Natural killer cell (primary cell): ENCODE measurements at regions of chr1 and their contacts with region 1.

Region 1: GRCh38 chr1:51044834-51045233 is 57.2 kb upstream of the C1orf185 start:
- DNase-seq: peak in 1 of 2 donors; percentile 25
- ATAC-seq: no peak
- H3K4me3 ChIP-seq: no peak overlapping the region
- H3K4me3 Mint-ChIP-seq: no peak overlapping the region
- H3K27ac ChIP-seq: no peak overlapping the region
- H3K27ac Mint-ChIP-seq: no peak overlapping the region
- H3K4me1 ChIP-seq: no peaks in the 10 kb centered on the region
- H3K4me1 Mint-ChIP-seq: no peaks in the 10 kb centered on the region
- H3K27me3 ChIP-seq: no peaks in the 10 kb centered on the region
- H3K27me3 Mint-ChIP-seq: peaks cover 17 to 43% of the 10 kb centered on the region in 2 donors
- CTCF ChIP-seq: peak; percentile 33

Region 2: DNA sequence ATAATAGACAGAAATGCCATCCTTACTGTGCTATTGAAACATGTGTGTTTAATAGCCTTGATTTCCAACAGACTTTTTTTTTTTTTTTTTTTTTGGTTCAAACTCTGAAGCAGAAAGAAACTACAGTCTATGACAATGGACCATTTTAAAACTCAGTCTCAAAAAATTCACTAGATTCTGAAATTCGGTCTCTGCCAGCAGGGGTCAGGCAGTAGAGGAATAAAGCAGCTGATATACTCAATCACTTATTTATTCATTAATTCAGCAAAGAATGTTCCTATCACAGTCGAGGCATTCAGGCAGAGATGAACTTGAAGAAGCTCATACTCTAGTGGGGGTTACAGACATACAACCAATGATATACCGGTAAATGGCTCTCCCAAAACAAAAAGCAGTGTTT is 360.6 kb before region 1 on chr1:
- intact Hi-C with region 1: no loop called
- DNase-seq: no peak
- ATAC-seq: no peak
- H3K4me3 ChIP-seq: no peak overlapping the region
- H3K4me3 Mint-ChIP-seq: no peak overlapping the region
- H3K27ac ChIP-seq: no peak overlapping the region
- H3K27ac Mint-ChIP-seq: no peak overlapping the region
- H3K4me1 ChIP-seq: no peaks in the 10 kb centered on the region
- H3K4me1 Mint-ChIP-seq: no peaks in the 10 kb centered on the region
- H3K27me3 ChIP-seq: no peaks in the 10 kb centered on the region
- H3K27me3 Mint-ChIP-seq: no peaks in the 10 kb centered on the region
- CTCF ChIP-seq: no peak

Region 3: DNA sequence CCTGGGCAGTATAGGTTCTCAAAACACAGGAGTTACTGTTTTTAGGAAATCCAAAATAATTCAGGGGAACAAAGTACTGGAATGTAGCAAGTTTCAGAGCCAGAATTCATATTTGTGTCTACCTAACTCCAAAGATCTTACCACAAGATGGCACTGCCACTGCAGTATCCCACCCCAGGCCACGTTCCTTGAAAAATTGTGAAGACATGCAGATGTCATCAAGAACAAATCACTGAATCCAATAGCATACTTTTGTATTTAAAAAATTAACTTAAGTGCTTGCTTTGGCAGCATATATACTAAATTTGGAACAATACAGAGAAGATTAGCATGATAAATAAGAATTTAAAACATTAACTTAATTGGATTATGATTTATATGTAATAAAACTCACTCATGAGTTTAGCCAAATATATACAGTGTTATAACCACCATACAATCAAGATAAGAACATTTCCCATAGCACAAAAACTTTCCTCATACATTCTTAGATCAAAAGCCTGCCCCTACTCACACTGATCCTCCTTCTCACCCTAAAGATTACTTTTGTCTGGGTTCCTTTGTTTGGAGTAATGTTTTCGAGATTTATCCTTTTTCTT is 294.7 kb before region 1 on chr1:
- intact Hi-C with region 1: no loop called
- DNase-seq: peak in 1 of 2 donors; percentile 13
- ATAC-seq: no peak
- H3K4me3 ChIP-seq: no peak overlapping the region
- H3K4me3 Mint-ChIP-seq: no peak overlapping the region
- H3K27ac ChIP-seq: no peak overlapping the region
- H3K27ac Mint-ChIP-seq: no peak overlapping the region
- H3K4me1 ChIP-seq: no peaks in the 10 kb centered on the region
- H3K4me1 Mint-ChIP-seq: peaks cover 0 to 4% of the 10 kb centered on the region in 2 donors
- H3K27me3 ChIP-seq: no peaks in the 10 kb centered on the region
- H3K27me3 Mint-ChIP-seq: no peaks in the 10 kb centered on the region
- CTCF ChIP-seq: peak; percentile 12

Region 4: GRCh38 chr1:50873458-50874187 is 171.2 kb before region 1 on chr1:
- intact Hi-C with region 1: loop called (anchors 10 kb)
- DNase-seq: peak; percentile 37 to 76
- ATAC-seq: peak; percentile 58 to 77 (median 76)
- H3K4me3 ChIP-seq: no peak overlapping the region
- H3K4me3 Mint-ChIP-seq: no peak overlapping the region
- H3K27ac ChIP-seq: no peak overlapping the region
- H3K27ac Mint-ChIP-seq: no peak overlapping the region
- H3K4me1 ChIP-seq: no peaks in the 10 kb centered on the region
- H3K4me1 Mint-ChIP-seq: peaks cover 32 to 36% of the 10 kb centered on the region in 2 donors
- H3K27me3 ChIP-seq: no peaks in the 10 kb centered on the region
- H3K27me3 Mint-ChIP-seq: no peaks in the 10 kb centered on the region
- CTCF ChIP-seq: peak; percentile 79

Region 5: DNA sequence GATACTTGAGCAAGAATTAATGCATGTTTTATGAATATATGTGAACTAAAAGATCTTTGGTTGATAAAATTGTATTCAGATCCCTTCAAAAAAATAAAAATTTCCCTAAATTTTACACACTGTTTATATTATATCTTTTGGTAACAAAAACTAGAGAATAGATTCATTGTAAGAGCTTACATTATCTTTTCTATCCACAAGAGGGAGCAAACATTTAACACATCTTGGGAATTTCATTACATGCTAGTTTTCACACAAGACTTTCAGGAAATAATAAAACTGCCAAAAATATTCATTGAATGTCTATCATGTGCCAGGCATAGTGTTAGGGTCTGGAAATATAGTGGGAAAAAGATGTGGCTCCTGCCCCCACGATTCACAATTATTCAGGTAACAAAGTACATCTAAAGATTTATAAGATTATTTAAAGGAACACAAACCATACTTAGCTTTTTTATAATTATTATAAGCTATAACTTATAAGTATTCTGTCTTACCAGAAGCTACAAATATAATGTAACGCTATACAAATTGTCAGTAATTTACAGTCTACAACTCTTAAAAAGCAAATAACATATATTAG is 115.4 kb before region 1 on chr1:
- intact Hi-C with region 1: loop called (anchors 5 kb)
- DNase-seq: peak in 1 of 2 donors; percentile 54
- ATAC-seq: no peak
- H3K4me3 ChIP-seq: no peak overlapping the region
- H3K4me3 Mint-ChIP-seq: no peak overlapping the region
- H3K27ac ChIP-seq: no peak overlapping the region
- H3K27ac Mint-ChIP-seq: no peak overlapping the region
- H3K4me1 ChIP-seq: no peaks in the 10 kb centered on the region
- H3K4me1 Mint-ChIP-seq: peaks cover 29 to 46% of the 10 kb centered on the region in 2 donors
- H3K27me3 ChIP-seq: no peaks in the 10 kb centered on the region
- H3K27me3 Mint-ChIP-seq: no peaks in the 10 kb centered on the region
- CTCF ChIP-seq: peak; percentile 61